ENCODE measurements at regions of chr10 and their contacts with region 1.

Region 1: DNA sequence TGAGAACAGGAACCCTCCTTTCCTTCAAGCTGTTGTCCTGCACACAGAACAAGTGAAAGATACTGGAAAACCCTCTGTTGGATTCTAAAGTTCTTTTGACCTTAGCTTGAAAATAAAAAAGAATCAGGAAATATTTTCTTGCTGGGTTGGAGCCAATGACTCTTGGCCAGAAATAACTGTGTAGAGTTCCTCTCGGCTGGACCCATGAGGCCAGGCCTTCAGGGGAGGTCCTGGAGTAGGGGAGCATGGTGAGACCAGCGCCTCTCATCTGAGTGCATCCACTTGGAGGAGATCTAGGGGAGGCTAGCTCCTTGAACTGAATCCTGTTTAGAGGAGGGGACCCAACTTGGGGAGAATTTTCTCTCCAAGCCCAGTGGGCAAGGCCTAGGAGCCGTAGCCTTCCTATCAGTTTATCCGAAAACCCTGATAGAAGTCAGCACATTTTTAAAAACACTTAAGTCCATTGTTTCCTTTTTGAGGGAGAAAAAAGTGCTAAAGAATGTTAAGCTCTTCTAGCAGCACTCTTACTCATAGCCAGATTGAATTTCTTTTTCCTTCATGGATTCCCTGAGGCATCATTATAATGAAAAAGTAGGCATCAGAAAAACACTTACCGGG is 635.7 kb upstream of the ANKRD30A start:
- DNase-seq: peak; percentile 96
- ATAC-seq: peak; percentile 9
- H3K4me3 ChIP-seq: no peak overlapping the region
- H3K27ac ChIP-seq: peak overlapping the region; percentile 83
- H3K4me1 ChIP-seq: peaks cover 55% of the 10 kb centered on the region
- H3K27me3 ChIP-seq: no peaks in the 10 kb centered on the region
- CTCF ChIP-seq: no peak

Region 2: DNA sequence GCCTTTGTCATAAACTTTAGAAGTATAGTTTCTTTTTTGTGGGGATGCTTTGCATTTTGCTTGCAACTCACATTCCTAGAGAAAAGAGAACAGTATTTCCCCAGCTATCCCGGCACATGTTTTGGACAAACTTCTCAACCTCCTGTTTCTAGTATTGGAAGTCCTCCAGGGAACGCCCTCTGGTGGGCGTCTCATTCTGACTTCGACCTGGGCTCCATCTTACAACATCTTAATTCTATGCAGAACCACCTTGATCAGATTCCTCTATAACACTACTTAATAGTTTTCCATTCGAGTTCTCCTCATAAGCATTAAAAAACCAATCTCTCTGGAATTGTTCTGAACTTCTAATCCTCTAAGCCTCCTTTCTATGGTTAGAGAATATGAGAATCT is 708.1 kb before region 1 on chr10:
- CTCF ChIA-PET with region 1: no interaction called
- POLR2A ChIA-PET with region 1: no interaction called
- intact Hi-C with region 1: loop called (anchors 1 kb)
- DNase-seq: peak; percentile 72
- ATAC-seq: no peak
- H3K4me3 ChIP-seq: no peak overlapping the region
- H3K27ac ChIP-seq: peak overlapping the region; percentile 72; the same call in 1 of the 2 replicates
- H3K4me1 ChIP-seq: peaks cover 37% of the 10 kb centered on the region
- H3K27me3 ChIP-seq: no peaks in the 10 kb centered on the region
- CTCF ChIP-seq: peak; percentile 72

Region 3: DNA sequence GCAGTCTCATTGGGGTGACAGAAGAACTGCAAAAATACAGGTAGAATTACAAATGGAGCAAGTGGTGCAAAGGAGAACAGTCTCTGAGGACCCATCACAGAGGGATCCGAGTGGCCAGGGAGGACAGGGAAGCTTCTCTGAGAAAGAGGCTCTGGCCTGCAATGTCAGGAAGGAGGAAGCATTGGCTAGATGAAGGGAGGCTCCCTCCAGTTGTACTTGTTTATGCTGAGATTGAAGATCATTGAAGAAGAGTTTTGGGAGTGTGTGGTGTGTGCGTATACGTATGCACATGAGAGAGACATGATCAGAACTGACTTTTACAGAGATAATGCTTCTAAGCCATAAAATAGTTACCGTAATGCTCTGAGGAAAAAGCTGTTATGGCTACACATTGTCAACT is 572.9 kb before region 1 on chr10:
- CTCF ChIA-PET with region 1: no interaction called
- POLR2A ChIA-PET with region 1: no interaction called
- intact Hi-C with region 1: loop called (anchors 1 kb)
- DNase-seq: peak; percentile 64
- ATAC-seq: peak; percentile 21
- H3K4me3 ChIP-seq: no peak overlapping the region
- H3K27ac ChIP-seq: no peak overlapping the region
- H3K4me1 ChIP-seq: peaks cover 22% of the 10 kb centered on the region
- H3K27me3 ChIP-seq: no peaks in the 10 kb centered on the region
- CTCF ChIP-seq: peak; percentile 68

Region 4: GRCh38 chr10:36126076-36126475 is 363.6 kb before region 1 on chr10:
- CTCF ChIA-PET with region 1: interaction called, 5 read pairs
- POLR2A ChIA-PET with region 1: no interaction called
- intact Hi-C with region 1: loop called (anchors 2 kb)
- DNase-seq: peak; percentile 96
- ATAC-seq: peak; percentile 98
- H3K4me3 ChIP-seq: no peak overlapping the region
- H3K27ac ChIP-seq: peak overlapping the region; percentile 55
- H3K4me1 ChIP-seq: peaks cover 24% of the 10 kb centered on the region
- H3K27me3 ChIP-seq: no peaks in the 10 kb centered on the region
- CTCF ChIP-seq: no peak

Region 5: GRCh38 chr10:36462194-36462593 is 27.5 kb before region 1 on chr10:
- CTCF ChIA-PET with region 1: no interaction called
- POLR2A ChIA-PET with region 1: no interaction called
- intact Hi-C with region 1: loop called (anchors 1 kb)
- DNase-seq: peak; percentile 95
- ATAC-seq: no peak
- H3K4me3 ChIP-seq: no peak overlapping the region
- H3K27ac ChIP-seq: no peak overlapping the region
- H3K4me1 ChIP-seq: peaks cover 40% of the 10 kb centered on the region
- H3K27me3 ChIP-seq: no peaks in the 10 kb centered on the region
- CTCF ChIP-seq: no peak

Region 6: GRCh38 chr10:36629476-36629875 is 139.8 kb after region 1 on chr10:
- CTCF ChIA-PET with region 1: no interaction called
- POLR2A ChIA-PET with region 1: interaction called, 5 read pairs
- intact Hi-C with region 1: loop called (anchors 1 kb)
- DNase-seq: peak; percentile 76
- ATAC-seq: peak; percentile 71
- H3K4me3 ChIP-seq: no peak overlapping the region
- H3K27ac ChIP-seq: peak overlapping the region; percentile 81
- H3K4me1 ChIP-seq: peaks cover 24% of the 10 kb centered on the region
- H3K27me3 ChIP-seq: no peaks in the 10 kb centered on the region
- CTCF ChIP-seq: no peak